PC-9 (cell line): ENCODE measurements at regions of chr5 and their contacts with region 1.

Region 1: GRCh38 chr5:17511775-17512325 is 6.3 kb upstream of the TAF11L3 start:
- DNase-seq: no peak
- H3K4me3 ChIP-seq: no peak overlapping the region
- H3K27ac ChIP-seq: no peak overlapping the region
- H3K4me1 ChIP-seq: no peaks in the 10 kb centered on the region
- H3K27me3 ChIP-seq: peaks cover 46% of the 10 kb centered on the region
- CTCF ChIP-seq: no peak

Region 2: GRCh38 chr5:17620627-17621026 is 108.8 kb after region 1 on chr5:
- CTCF ChIA-PET with region 1: no interaction called
- POLR2A ChIA-PET with region 1: no interaction called
- intact Hi-C with region 1: loop called (anchors 1 kb)
- DNase-seq: no peak
- H3K4me3 ChIP-seq: no peak overlapping the region
- H3K27ac ChIP-seq: no peak overlapping the region
- H3K4me1 ChIP-seq: no peaks in the 10 kb centered on the region
- H3K27me3 ChIP-seq: peaks cover 34% of the 10 kb centered on the region
- CTCF ChIP-seq: peak; percentile 49

Region 3: DNA sequence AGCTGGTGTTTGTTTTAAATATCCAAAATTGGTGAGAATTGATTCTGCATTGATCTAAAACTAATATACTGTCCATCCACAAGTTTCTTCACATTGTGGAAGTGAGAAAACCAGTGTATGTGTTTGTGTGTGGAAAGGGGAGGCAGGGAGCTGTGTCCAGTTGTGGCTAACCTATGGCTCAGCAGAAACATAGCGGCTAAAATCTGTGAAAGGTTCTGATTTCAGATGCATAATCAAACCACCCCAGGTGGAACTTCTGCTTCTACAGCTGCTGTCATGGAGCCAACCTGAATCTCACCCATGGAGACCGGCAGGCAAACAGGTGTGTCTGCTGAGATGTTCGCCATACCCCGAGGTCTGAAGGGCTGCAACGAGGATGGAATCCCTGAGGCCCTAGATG is 122.3 kb after region 1 on chr5 and contains the start of gene TAF11L14:
- CTCF ChIA-PET with region 1: no interaction called
- POLR2A ChIA-PET with region 1: no interaction called
- intact Hi-C with region 1: no loop called
- DNase-seq: no peak
- H3K4me3 ChIP-seq: no peak within 1 kb of the TSS
- H3K27ac ChIP-seq: no peak within 1 kb of the TSS
- H3K4me1 ChIP-seq: no peaks in the 10 kb centered on the region
- H3K27me3 ChIP-seq: peaks cover 27% of the 10 kb centered on the region
- CTCF ChIP-seq: no peak
- total RNA-seq, gene TAF11L14: not detected in 2 replicates